ENCODE measurements at regions of chr18 and their contacts with region 1.

Region 1: DNA sequence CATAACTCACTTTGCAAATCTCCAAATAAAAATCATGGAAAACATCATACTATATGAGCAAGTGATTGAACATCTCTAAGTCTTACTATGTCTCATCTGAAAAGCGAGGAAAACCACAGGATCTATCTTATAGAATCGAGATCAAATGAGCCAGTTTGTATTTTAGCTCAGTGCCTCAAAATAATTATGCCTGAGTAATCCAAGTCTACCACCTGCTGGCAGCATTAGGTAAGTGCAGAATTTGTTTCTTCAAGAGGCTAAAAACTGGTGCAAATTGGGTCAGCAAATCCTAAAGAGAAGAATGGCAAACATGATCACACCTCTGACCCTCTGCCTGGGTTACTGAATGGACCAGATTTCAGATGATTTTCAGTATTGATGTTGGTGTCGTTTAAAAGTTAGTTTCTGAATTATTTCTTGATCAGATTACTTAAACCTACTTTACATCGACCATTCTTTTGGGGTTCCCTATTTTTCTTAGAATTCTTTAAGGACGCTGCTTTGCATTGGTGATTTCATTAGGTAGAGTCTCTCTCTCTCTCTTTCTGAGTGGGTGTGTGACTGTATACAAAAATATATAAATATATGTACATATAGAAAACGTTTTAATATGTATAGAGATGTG is 12.7 kb upstream of the FHOD3 start:
- DNase-seq: peak; percentile 29
- H3K4me3 Mint-ChIP-seq: no peak overlapping the region
- H3K27ac Mint-ChIP-seq: no peak overlapping the region
- H3K4me1 Mint-ChIP-seq: peaks cover 4% of the 10 kb centered on the region
- H3K27me3 Mint-ChIP-seq: peaks cover 21% of the 10 kb centered on the region

Region 2: GRCh38 chr18:35386600-35387351 is 898.0 kb before region 1 on chr18:
- CTCF ChIA-PET with region 1: interaction called, 5 read pairs
- POLR2A ChIA-PET with region 1: no interaction called
- intact Hi-C with region 1: loop called (anchors 5 kb)
- DNase-seq: peak; percentile 69
- H3K4me3 Mint-ChIP-seq: no peak overlapping the region
- H3K27ac Mint-ChIP-seq: no peak overlapping the region
- H3K4me1 Mint-ChIP-seq: peaks cover 2% of the 10 kb centered on the region
- H3K27me3 Mint-ChIP-seq: peaks cover 16% of the 10 kb centered on the region

Region 3: DNA sequence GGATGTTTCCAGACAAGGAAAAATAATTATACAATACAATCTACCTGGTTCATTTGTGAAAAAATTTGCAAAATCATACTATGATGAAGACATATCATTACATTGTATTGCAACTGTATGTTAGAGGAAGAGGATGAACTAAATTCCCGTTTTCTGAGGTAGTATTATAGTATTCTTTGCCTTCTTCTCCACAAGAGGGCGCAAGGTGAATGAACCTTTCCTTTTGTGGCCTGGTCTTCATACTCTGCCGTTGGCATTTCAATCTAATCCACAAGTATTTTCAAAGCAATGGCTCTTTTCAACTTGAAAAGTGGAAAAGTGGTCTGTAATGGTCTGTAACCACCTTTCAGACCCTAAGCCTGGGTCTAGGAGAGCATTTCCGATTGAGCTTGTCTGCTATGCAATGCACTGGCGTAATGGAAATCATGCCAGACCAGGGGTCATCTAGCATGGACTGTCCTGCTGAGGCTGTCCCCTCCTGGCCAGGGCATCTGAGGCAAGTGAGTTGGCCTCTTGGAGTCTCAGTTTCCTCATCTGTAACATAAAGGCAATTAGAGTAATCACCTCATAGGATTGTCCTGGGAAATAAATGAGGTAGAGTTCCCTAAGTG is 876.8 kb before region 1 on chr18:
- CTCF ChIA-PET with region 1: no interaction called
- POLR2A ChIA-PET with region 1: no interaction called
- intact Hi-C with region 1: loop called (anchors 1 kb)
- DNase-seq: peak; percentile 27
- H3K4me3 Mint-ChIP-seq: no peak overlapping the region
- H3K27ac Mint-ChIP-seq: no peak overlapping the region
- H3K4me1 Mint-ChIP-seq: peaks cover 7% of the 10 kb centered on the region
- H3K27me3 Mint-ChIP-seq: peaks cover 5% of the 10 kb centered on the region

Region 4: GRCh38 chr18:35756506-35757117 is 528.2 kb before region 1 on chr18:
- CTCF ChIA-PET with region 1: interaction called, 8 read pairs
- POLR2A ChIA-PET with region 1: no interaction called
- intact Hi-C with region 1: loop called (anchors 2 kb)
- DNase-seq: peak; percentile 54
- H3K4me3 Mint-ChIP-seq: no peak overlapping the region
- H3K27ac Mint-ChIP-seq: no peak overlapping the region
- H3K4me1 Mint-ChIP-seq: no peaks in the 10 kb centered on the region
- H3K27me3 Mint-ChIP-seq: peaks cover 24% of the 10 kb centered on the region

Region 5: GRCh38 chr18:36015629-36016028 is 269.2 kb before region 1 on chr18:
- CTCF ChIA-PET with region 1: interaction called, 71 read pairs
- POLR2A ChIA-PET with region 1: no interaction called
- intact Hi-C with region 1: loop called (anchors 1 kb)
- DNase-seq: no peak
- H3K4me3 Mint-ChIP-seq: no peak overlapping the region
- H3K27ac Mint-ChIP-seq: no peak overlapping the region
- H3K4me1 Mint-ChIP-seq: no peaks in the 10 kb centered on the region
- H3K27me3 Mint-ChIP-seq: no peaks in the 10 kb centered on the region

Region 6: GRCh38 chr18:36086186-36086585 is 198.6 kb before region 1 on chr18:
- CTCF ChIA-PET with region 1: interaction called, 10 read pairs
- POLR2A ChIA-PET with region 1: no interaction called
- intact Hi-C with region 1: no loop called
- DNase-seq: no peak
- H3K4me3 Mint-ChIP-seq: no peak overlapping the region
- H3K27ac Mint-ChIP-seq: no peak overlapping the region
- H3K4me1 Mint-ChIP-seq: peaks cover 2% of the 10 kb centered on the region
- H3K27me3 Mint-ChIP-seq: no peaks in the 10 kb centered on the region

Region 7: DNA sequence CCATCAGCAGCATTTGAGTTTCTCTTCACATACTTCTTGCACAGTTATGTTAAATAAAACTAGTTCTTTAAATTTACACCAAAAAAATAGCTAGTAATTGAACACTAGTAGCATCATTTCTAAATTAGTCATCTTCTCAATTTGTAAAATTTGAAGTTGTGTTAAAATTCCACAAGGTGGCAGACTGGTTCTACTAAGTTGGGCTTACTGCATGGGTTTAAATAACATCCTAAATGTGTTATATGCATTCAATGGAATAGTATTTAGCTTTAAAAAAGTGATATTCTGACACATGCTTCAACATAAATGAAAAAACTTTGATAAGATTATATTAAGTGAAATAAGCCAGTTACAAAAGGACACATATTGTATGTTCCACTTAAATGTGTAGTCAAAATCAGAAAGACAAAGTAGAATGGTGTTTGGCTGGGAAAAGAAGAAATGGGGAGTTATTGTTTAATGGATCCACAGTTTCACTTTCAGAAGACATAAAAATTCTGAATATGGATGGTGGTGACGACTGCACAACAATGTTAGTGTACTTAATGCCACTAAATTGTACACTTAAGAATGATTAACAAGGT is 188.8 kb before region 1 on chr18:
- CTCF ChIA-PET with region 1: interaction called, 133 read pairs
- POLR2A ChIA-PET with region 1: no interaction called
- intact Hi-C with region 1: loop called (anchors 1 kb)
- DNase-seq: no peak
- H3K4me3 Mint-ChIP-seq: no peak overlapping the region
- H3K27ac Mint-ChIP-seq: no peak overlapping the region
- H3K4me1 Mint-ChIP-seq: peaks cover 12% of the 10 kb centered on the region
- H3K27me3 Mint-ChIP-seq: peaks cover 2% of the 10 kb centered on the region

Region 8: DNA sequence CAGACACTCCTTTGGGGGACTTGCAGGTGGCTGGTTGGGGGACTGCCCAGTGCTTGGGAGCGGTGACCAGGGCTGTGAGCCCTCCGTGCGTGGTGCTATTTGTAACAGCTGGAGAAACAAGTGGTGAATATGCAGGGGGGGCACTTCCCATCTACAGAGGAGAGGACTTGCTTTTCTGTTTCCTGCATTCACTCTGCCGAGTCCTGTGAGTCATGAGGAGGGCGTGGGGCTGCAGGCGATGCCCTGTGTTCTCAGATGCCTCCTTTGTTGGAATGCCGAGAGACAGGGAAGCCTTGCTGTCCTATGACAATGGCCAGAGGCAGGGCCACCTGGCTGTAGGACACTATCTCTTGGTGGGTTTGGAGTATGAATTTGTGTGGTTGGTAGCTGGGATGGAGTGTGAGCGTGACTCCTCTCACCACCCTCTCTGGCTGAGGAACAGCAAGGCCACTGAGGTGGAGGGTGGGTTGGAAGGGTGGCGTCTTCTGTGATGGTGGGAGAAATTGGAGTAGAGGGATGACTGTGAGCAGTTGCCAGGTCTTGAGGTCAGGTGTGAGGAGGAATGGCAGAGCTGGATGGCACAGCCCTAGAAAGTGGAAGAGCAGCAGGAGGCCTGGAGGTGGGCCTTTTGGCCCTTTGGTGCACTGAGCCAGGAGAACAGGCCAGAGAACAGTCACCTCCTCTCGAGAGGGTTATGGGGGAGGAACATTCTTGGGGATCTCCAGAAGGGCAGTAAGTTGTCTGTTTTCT is 37.0 kb after region 1 on chr18:
- CTCF ChIA-PET with region 1: no interaction called
- POLR2A ChIA-PET with region 1: no interaction called
- intact Hi-C with region 1: no loop called
- DNase-seq: no peak
- H3K4me3 Mint-ChIP-seq: no peak overlapping the region
- H3K27ac Mint-ChIP-seq: no peak overlapping the region
- H3K4me1 Mint-ChIP-seq: no peaks in the 10 kb centered on the region
- H3K27me3 Mint-ChIP-seq: peaks cover 17% of the 10 kb centered on the region

Measured in activated CD4-positive, alpha-beta memory T cell treated with anti-CD3 and anti-CD28 coated beads for 36 hours (primary cell).